A549 (cell line): ENCODE measurements at regions of chr4 and their contacts with region 1.

Region 1: GRCh38 chr4:121370729-121371325 is 10.0 kb downstream of the QRFPR start:
- DNase-seq: peak in 1 of 2 experiments; percentile 23
- ATAC-seq: peak; percentile 59 to 73; a peak in 3 of 6 replicates
- H3K4me3 ChIP-seq: no peak overlapping the region
- H3K27ac ChIP-seq: no peak overlapping the region
- H3K4me1 ChIP-seq: no peaks in the 10 kb centered on the region
- CTCF ChIP-seq: peak; percentile 56
- EP300 ChIP-seq: no peak
- POLR2A ChIP-seq: no peak
- RAD21 ChIP-seq: peak; percentile 46 to 52

Region 2: GRCh38 chr4:121353213-121353612 is 17.6 kb before region 1 on chr4:
- CTCF ChIA-PET with region 1: no interaction called
- POLR2A ChIA-PET with region 1: no interaction called
- DNase-seq: no peak
- ATAC-seq: no peak
- H3K4me3 ChIP-seq: no peak overlapping the region
- H3K27ac ChIP-seq: no peak overlapping the region
- H3K4me1 ChIP-seq: no peaks in the 10 kb centered on the region
- CTCF ChIP-seq: no peak
- EP300 ChIP-seq: no peak
- POLR2A ChIP-seq: no peak
- RAD21 ChIP-seq: no peak

Region 3: DNA sequence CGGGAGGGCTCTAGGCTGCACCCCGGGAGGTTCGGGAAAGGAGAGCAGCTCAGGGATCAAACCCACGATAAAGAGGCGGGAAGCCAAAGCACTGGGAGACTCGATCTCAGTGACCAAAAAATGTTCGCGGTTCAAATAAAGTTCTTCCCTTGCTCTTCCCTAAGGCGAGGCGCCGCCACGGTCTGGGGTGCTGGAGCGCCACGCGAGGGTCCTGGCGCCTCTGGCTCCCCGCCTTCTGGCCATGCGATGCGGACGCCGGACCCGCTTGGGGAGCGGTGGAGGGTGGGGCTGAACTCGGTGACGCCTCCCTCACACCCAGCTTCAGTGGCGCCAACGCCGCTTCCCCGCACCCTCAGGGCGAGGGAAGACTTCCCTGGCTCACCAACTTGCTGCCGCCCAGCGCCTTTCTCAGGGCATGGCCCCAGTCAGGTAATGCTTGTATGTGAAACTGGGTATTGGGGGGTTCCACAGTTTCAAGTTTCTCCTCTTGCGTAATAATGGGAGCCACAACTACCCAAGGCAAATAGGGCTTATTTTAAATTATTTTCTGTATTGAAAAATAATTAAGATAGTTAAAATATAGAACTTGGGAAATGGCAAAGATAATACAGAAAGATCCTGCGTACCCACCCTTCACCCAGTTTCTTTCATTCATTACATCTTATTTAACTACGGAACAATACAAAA is 10.1 kb after region 1 on chr4 and contains the start of gene QRFPR:
- CTCF ChIA-PET with region 1: interaction called, 11 read pairs
- POLR2A ChIA-PET with region 1: no interaction called
- DNase-seq: peak in 1 of 2 experiments; percentile 10
- ATAC-seq: peak; percentile 89
- H3K4me3 ChIP-seq: peak within 1 kb of the TSS; percentile 42
- H3K27ac ChIP-seq: no peak within 1 kb of the TSS
- H3K4me1 ChIP-seq: no peaks in the 10 kb centered on the region
- CTCF ChIP-seq: no peak
- EP300 ChIP-seq: no peak
- POLR2A ChIP-seq: no peak
- RAD21 ChIP-seq: no peak
- polyA plus RNA-seq, gene QRFPR: not detected in 2 replicates

Region 4: GRCh38 chr4:121400632-121401031 is 29.8 kb after region 1 on chr4:
- CTCF ChIA-PET with region 1: no interaction called
- POLR2A ChIA-PET with region 1: no interaction called
- DNase-seq: no peak
- ATAC-seq: no peak
- H3K4me3 ChIP-seq: no peak overlapping the region
- H3K27ac ChIP-seq: no peak overlapping the region
- H3K4me1 ChIP-seq: no peaks in the 10 kb centered on the region
- CTCF ChIP-seq: no peak
- EP300 ChIP-seq: no peak
- POLR2A ChIP-seq: no peak
- RAD21 ChIP-seq: no peak